Activated naive CD4-positive, alpha-beta T cell treated with anti-CD3 and anti-CD28 coated beads for 36 hours (primary cell): ENCODE measurements at regions of chr3 and their contacts with region 1.

Region 1: GRCh38 chr3:142148792-142149672 is at the start of gene TFDP2:
- DNase-seq: peak; percentile 89
- H3K4me3 Mint-ChIP-seq: peak within 1 kb of the TSS; percentile 84
- H3K27ac Mint-ChIP-seq: no peak within 1 kb of the TSS
- H3K4me1 Mint-ChIP-seq: peaks cover 24% of the 10 kb centered on the region
- H3K27me3 Mint-ChIP-seq: no peaks in the 10 kb centered on the region
- total RNA-seq, gene TFDP2: 23.0 to 25.0 TPM

Region 2: GRCh38 chr3:141959921-141960554 is 189.0 kb before region 1 on chr3:
- CTCF ChIA-PET with region 1: no interaction called
- intact Hi-C with region 1: loop called (anchors 2 kb)
- DNase-seq: no peak
- H3K4me3 Mint-ChIP-seq: no peak overlapping the region
- H3K27ac Mint-ChIP-seq: no peak overlapping the region
- H3K4me1 Mint-ChIP-seq: peaks cover 3% of the 10 kb centered on the region
- H3K27me3 Mint-ChIP-seq: no peaks in the 10 kb centered on the region

Region 3: DNA sequence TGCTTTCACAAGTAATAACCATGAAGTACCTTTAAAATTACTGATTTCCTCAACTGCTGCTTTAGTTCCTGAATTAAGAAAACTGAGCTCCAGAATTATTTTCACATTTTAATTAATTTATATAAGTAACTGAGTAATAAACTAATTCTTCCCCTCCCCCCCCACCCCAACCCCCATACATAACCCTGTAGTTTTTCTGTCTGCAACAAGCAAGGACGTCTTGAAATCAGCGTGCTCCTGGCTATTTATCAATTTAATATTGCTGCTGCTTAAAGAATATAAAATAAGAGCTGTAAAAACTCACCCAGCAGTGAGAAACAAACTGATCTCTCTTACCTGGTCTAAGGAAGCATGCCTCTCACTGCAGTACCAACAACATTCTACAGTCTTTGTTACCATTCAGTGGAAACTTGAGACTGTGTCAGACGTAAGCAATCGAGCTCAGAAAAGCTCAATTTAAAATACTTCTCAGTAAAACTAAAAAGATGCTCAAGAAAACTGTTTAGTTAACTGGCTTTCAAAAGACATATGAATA is 120.7 kb before region 1 on chr3:
- CTCF ChIA-PET with region 1: no interaction called
- intact Hi-C with region 1: loop called (anchors 2 kb)
- DNase-seq: peak; percentile 62
- H3K4me3 Mint-ChIP-seq: peak overlapping the region; percentile 80
- H3K27ac Mint-ChIP-seq: peak overlapping the region; percentile 73
- H3K4me1 Mint-ChIP-seq: peaks cover 24% of the 10 kb centered on the region
- H3K27me3 Mint-ChIP-seq: no peaks in the 10 kb centered on the region

Region 4: DNA sequence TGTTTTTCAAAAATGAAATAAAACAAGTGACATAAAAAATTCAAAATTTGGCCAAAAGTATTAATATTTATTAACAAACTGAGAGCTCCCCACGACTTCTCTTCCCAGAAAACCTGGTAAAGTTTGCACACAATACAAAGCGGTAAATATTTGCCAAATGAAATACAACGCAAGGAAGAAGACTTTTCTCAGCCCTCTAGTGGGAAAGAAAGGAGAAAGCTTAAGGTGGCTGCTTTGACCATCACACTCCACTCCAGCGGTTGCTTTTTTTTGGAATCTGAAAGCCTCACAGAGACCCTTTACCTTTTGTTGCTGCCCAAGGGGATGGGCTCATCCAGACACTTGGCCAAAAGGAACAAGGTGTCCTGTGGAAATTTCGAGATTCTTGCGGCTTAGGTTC is 77.5 kb after region 1 on chr3:
- CTCF ChIA-PET with region 1: no interaction called
- intact Hi-C with region 1: loop called (anchors 1 kb)
- DNase-seq: no peak
- H3K4me3 Mint-ChIP-seq: no peak overlapping the region
- H3K27ac Mint-ChIP-seq: no peak overlapping the region
- H3K4me1 Mint-ChIP-seq: peaks cover 19% of the 10 kb centered on the region
- H3K27me3 Mint-ChIP-seq: no peaks in the 10 kb centered on the region

Region 5: GRCh38 chr3:142723968-142724681 is 575.1 kb after region 1 on chr3 and contains the start of gene TRPC1:
- CTCF ChIA-PET with region 1: no interaction called
- intact Hi-C with region 1: loop called (anchors 5 kb)
- DNase-seq: peak; percentile 57
- H3K4me3 Mint-ChIP-seq: peak within 1 kb of the TSS; percentile 83
- H3K27ac Mint-ChIP-seq: peak within 1 kb of the TSS; percentile 82
- H3K4me1 Mint-ChIP-seq: peaks cover 10% of the 10 kb centered on the region
- H3K27me3 Mint-ChIP-seq: peaks cover 20% of the 10 kb centered on the region
- total RNA-seq, gene TRPC1: 3.1 to 4.8 TPM